Activated CD4-positive, alpha-beta T cell treated with anti-CD3 and anti-CD28 coated beads, Interleukin-2, amount 10 ng/mL, durations not matched to agents 7 days and 5 days (primary cell): ENCODE measurements at regions of chr7 and their contacts with region 1.

Region 1: GRCh38 chr7:50349963-50350944 is 45.7 kb downstream of the IKZF1 start:
- DNase-seq: peak; percentile 80
- H3K4me3 Mint-ChIP-seq: peak overlapping the region; percentile 61
- H3K27ac Mint-ChIP-seq: peak overlapping the region; percentile 94
- H3K4me1 Mint-ChIP-seq: peaks cover 97% of the 10 kb centered on the region
- H3K27me3 Mint-ChIP-seq: no peaks in the 10 kb centered on the region

Region 2: DNA sequence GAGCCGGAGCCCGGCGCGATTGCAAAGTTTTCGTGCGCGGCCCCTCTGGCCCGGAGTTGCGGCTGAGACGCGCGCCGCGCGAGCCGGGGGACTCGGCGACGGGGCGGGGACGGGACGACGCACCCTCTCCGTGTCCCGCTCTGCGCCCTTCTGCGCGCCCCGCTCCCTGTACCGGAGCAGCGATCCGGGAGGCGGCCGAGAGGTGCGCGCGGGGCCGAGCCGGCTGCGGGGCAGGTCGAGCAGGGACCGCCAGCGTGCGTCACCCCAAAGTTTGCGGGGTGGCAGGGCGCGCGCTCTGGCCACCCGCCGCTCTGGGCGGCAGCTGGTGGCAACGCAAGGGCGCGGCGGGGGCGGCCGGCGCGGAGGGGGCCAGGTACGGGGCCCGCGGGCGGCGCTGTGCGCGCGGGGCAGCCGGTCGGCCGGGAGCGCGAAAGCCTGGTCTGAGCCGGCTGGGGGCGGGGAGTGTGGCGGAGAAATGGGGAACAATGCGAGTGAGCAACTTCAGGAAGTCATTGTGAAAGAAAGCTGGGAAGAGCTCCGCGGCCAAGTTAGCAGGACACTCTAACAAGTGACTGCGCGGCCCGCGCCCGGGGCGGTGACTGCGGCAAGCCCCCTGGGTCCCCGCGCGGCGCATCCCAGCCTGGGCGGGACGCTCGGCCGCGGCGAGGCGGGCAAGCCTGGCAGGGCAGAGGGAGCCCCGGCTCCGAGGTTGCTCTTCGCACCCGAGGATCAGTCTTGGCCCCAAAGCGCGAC is 45.9 kb before region 1 on chr7 and contains the start of gene IKZF1:
- CTCF ChIA-PET with region 1: interaction called, 5 read pairs
- POLR2A ChIA-PET with region 1: interaction called, 10 read pairs
- DNase-seq: peak; percentile 57
- H3K4me3 Mint-ChIP-seq: peak within 1 kb of the TSS; percentile 97
- H3K27ac Mint-ChIP-seq: peak within 1 kb of the TSS; percentile 100
- H3K4me1 Mint-ChIP-seq: peaks cover 38% of the 10 kb centered on the region
- H3K27me3 Mint-ChIP-seq: no peaks in the 10 kb centered on the region
- total RNA-seq, gene IKZF1: 379 to 406 TPM

Region 3: DNA sequence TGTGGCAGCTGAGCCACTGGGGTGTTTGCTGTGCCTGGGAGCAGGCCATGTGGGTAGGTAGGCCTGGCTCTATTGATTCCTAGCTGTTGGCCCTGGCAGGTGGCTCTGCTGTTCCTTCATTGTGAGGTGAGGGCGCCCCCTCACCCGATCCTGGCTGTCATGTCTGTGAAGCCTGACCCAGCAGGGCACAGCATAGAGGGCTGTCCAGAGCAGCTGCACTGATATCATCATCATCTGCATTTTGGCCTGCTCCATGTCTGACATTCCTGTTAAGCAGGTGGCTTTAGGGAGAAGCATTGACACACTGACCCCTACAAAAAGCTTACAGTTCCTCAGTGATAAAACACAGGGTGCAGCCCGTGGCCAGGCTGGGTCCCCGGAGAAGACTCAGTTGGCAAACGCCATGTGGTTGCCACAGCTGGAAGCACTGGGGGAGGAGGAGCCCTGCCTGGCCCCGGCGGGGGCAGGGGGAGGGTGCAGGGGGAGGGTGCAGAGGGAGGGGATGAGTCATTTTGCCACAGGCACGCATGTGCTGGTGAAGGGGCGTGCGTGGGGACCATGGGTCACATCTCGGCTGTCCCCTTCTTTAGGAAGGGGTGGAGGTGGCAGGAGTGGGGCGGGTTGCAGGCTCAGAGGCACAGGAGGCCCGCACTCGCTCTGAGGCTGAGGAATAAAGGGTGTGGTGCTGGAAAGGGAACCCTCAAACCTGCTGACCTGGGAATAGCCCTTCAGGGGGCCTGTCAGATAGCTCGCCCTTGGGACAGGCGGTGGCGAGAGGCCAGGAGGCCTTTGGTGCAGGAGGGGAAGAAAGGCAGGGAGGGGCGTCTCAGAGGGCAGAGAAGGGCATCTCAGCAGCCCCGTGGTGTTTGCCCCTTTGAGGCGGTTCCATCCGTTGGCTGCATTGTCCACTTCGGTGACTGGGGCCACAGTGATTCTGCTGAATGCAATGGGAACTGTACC is 14.2 kb before region 1 on chr7:
- CTCF ChIA-PET with region 1: interaction called, 19 read pairs
- POLR2A ChIA-PET with region 1: interaction called, 9 read pairs
- DNase-seq: peak; percentile 81
- H3K4me3 Mint-ChIP-seq: no peak overlapping the region
- H3K27ac Mint-ChIP-seq: no peak overlapping the region
- H3K4me1 Mint-ChIP-seq: no peaks in the 10 kb centered on the region
- H3K27me3 Mint-ChIP-seq: no peaks in the 10 kb centered on the region

Region 4: DNA sequence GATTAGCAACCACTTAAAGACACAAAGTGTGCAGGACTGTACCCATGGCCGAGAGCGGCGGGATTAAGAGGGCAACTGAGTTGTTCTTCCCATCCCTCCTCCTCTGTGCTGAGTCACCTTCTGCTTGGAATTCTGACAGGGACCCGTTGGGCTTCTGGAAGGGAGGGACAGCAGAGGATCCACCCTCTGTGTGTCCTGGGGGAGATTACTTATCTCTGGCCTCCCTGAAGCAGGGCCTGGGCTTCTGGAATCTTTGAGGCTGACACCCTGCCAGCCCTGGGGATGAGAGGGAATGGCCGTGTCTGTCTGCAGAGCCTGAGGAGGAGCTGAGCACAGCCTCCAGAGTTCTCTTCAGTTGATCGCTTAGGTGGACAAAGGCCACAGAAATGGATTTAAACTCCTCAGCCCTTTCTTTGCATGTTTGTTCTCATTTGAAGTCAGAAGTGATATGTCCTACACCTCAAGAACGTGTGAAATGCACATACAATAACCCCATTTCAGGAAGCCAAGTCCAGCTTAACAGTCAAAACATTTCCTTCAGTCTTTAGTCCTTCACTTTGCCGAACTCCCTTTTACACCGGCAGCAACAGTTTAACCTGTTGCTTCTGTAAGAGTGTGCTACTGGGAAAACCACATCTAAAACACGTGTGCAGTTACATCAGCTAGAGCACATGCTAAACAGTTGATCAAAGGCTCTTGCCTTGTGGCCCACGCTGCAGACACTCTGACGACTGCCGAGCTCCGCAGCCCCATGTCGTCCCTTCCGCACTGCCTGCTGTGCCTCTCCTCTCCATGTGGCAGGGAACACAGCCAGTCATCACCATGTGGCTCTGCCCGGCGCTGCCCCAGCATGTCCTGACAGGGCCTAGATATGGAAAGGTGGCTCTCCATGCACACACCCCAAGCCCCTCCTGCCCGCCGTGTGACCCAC is 10.0 kb after region 1 on chr7:
- CTCF ChIA-PET with region 1: interaction called, 22 read pairs
- POLR2A ChIA-PET with region 1: interaction called, 5 read pairs
- DNase-seq: peak; percentile 87
- H3K4me3 Mint-ChIP-seq: peak overlapping the region; percentile 64
- H3K27ac Mint-ChIP-seq: peak overlapping the region; percentile 96
- H3K4me1 Mint-ChIP-seq: peaks cover 96% of the 10 kb centered on the region
- H3K27me3 Mint-ChIP-seq: no peaks in the 10 kb centered on the region

Region 5: DNA sequence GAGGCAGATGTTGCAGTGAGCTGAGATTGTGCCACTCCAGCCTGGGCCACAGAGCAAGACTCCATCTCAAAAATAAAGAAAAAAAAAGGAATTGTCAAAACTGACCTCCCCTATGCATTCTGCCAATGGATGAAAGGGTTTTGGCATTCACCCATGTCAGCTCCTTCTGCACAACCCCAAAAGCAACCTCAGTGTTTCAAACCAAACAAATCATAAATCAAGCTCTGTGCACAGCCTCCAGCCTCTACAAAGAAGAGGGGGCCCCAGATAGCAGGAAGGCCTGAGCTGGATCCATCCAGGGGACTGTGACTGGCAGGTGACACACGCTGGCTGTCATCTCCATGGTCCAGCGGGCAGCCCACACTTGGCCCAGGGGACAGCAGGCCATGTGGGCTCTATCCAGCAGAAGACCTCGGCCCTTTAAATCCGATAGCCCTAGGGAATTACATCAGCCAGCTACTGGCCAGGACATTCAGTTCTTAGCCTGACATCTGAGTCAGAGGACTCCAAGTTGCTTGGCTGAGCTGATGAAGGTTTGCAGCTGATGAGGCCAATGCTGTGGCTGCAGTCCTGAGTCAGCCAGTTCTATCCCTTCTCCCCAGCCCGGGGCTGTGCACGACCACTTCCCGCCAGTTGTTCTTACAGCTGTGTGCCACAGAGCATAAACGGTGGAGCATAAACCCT is 151.9 kb after region 1 on chr7:
- CTCF ChIA-PET with region 1: no interaction called
- POLR2A ChIA-PET with region 1: no interaction called
- DNase-seq: no peak
- H3K4me3 Mint-ChIP-seq: no peak overlapping the region
- H3K27ac Mint-ChIP-seq: no peak overlapping the region
- H3K4me1 Mint-ChIP-seq: peaks cover 4% of the 10 kb centered on the region
- H3K27me3 Mint-ChIP-seq: peaks cover 17% of the 10 kb centered on the region